Breast epithelium (tissue), 4 donors: ENCODE measurements at regions of chr5 and their contacts with region 1.

Region 1: GRCh38 chr5:136232316-136232715 is 39.4 kb upstream of the SMIM32 start:
- DNase-seq: no peak
- H3K4me3 ChIP-seq: no peak overlapping the region
- H3K27ac ChIP-seq: no peak overlapping the region
- H3K4me1 ChIP-seq: no peaks in the 10 kb centered on the region
- H3K27me3 ChIP-seq: no peaks in the 10 kb centered on the region
- CTCF ChIP-seq: no peak
- POLR2A ChIP-seq: no peak

Region 2: DNA sequence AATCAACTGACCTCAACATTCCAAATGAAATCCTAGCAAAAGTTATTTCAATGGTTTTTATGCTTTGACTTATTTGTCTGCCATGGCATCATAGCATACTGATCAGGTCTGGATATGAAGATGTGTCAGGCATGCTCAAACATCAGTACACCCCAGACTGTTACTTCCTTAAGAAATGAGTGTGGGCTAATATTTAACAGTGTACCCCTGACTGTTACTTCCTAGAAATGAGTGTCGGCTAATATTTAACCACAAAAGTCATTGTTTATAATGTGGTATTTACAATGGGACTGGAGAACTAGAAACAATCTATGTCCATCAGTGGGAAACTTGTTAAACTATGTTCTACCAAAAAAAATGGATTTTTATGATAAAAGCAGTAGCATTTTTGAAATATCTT is 1560.0 kb after region 1 on chr5:
- intact Hi-C with region 1: loop called (anchors 10 kb)
- DNase-seq: no peak
- H3K4me3 ChIP-seq: no peak overlapping the region
- H3K27ac ChIP-seq: no peak overlapping the region
- H3K4me1 ChIP-seq: no peaks in the 10 kb centered on the region
- H3K27me3 ChIP-seq: no peaks in the 10 kb centered on the region
- CTCF ChIP-seq: no peak
- POLR2A ChIP-seq: no peak